ENCODE measurements at regions of chr18 and their contacts with region 1.

Region 1: DNA sequence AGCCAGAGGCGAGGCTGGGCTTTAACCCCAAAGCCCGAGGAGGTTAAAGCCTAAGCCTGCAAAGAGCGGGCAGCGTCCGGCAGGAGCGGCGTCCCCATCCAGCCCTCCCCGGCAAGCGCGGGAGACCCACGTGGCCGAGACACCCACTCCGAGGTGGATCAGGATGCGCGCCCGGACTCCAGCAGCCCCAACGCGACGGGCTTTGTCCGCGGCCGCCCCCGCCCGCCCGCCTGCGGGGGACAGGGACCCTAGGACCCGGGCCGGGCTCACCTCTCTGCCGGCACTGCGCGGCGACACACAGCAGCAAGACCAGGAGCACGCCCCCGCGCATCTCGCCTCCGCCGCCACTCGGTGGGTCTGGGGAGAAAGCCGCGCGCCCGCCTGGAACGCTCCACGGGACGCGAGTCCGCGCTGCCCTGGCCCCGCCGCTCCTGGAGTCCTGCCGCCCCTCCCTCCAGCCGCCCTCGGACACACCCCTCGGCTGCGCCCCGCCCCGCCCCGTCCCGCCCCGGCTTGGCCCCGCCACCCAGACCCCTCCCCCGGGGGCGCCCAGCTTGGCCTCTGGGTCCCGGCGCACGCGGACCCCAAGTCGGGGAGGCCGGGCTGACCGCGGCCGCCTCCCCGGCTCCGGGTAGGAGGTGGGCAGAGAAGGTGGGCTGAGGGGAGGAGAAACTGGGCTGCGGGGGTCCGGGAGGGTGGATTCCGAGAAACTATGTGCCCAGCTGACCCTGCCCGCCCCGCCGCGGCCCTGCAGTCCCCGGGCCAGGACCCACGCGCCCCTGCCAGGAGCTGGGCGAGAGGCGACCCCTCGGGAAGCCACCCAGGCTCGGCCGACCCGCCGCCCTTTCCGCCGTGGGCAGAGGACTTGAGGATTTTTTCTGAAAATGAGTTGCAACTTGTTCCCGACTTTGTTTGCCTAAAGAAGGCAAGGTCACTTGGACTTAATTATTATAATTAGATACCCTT is at the start of gene LAMA1:
- DNase-seq: no peak
- H3K4me3 ChIP-seq: peak within 1 kb of the TSS; percentile 74 to 92 (median 83)
- H3K27ac ChIP-seq: no peak within 1 kb of the TSS
- H3K4me1 ChIP-seq: peaks cover 5% of the 10 kb centered on the region
- H3K27me3 ChIP-seq: no peaks in the 10 kb centered on the region
- CTCF ChIP-seq: peak in 1 of 2 donors; percentile 1
- total RNA-seq, gene LAMA1: 48.4 to 104 TPM

Region 2: GRCh38 chr18:7032537-7032936 is 85.1 kb before region 1 on chr18:
- CTCF ChIA-PET with region 1: no interaction called
- dilution Hi-C with region 1: no loop called
- in situ Hi-C with region 1: no loop called
- intact Hi-C with region 1: no loop called
- DNase-seq: no peak
- H3K4me3 ChIP-seq: no peak overlapping the region
- H3K27ac ChIP-seq: no peak overlapping the region
- H3K4me1 ChIP-seq: peaks cover 14% of the 10 kb centered on the region
- H3K27me3 ChIP-seq: no peaks in the 10 kb centered on the region
- CTCF ChIP-seq: no peak

Region 3: GRCh38 chr18:7084080-7085075 is 33.3 kb before region 1 on chr18:
- CTCF ChIA-PET with region 1: no interaction called
- dilution Hi-C with region 1: no loop called
- in situ Hi-C with region 1: no loop called
- intact Hi-C with region 1: loop called (anchors 2 kb)
- DNase-seq: peak; percentile 69
- H3K4me3 ChIP-seq: peak overlapping the region in 1 of 3 experiments; percentile 26
- H3K27ac ChIP-seq: peak overlapping the region; percentile 94
- H3K4me1 ChIP-seq: peaks cover 7% of the 10 kb centered on the region
- H3K27me3 ChIP-seq: no peaks in the 10 kb centered on the region
- CTCF ChIP-seq: no peak

Measured in mammary epithelial cell (primary cell).